Mucosa of descending colon (tissue), 3 donors: ENCODE measurements at regions of chr5 and their contacts with region 1.

Region 1: GRCh38 chr5:146541958-146542849 is 26.2 kb upstream of the GPR151 start:
- DNase-seq: peak; percentile 58 to 85 (median 84)
- ATAC-seq: peak; percentile 92
- H3K4me3 ChIP-seq: no peak overlapping the region
- H3K4me1 ChIP-seq: no peaks in the 10 kb centered on the region
- CTCF ChIP-seq: peak; percentile 81

Region 2: GRCh38 chr5:146965761-146966659 is 423.8 kb after region 1 on chr5:
- intact Hi-C with region 1: loop called (anchors 5 kb)
- DNase-seq: peak in 1 of 3 donors; percentile 80
- ATAC-seq: peak; percentile 88
- H3K4me3 ChIP-seq: no peak overlapping the region
- H3K4me1 ChIP-seq: no peaks in the 10 kb centered on the region
- CTCF ChIP-seq: peak; percentile 51

Region 3: DNA sequence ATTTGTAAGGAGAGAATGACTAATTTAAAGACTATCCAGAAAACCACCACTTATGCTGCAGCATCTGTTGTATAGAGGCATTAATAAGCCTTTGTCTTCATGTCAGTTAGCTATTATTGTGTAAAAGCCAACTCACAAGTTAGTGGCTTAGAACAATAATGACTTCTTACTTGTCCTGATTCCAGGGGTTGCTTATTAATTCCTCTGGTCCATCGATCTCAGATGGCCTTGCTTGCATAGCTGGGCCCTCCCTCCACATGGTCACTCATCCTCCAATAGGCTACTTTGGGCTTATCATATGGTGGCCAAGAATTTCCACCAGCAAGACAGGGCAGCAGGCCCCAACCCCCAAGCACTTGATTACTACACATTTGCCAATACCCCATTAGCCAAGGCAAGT is 648.1 kb after region 1 on chr5:
- intact Hi-C with region 1: loop called in 1 of 2 experiments (anchors 5 kb)
- DNase-seq: no peak
- ATAC-seq: no peak
- H3K4me3 ChIP-seq: no peak overlapping the region
- H3K4me1 ChIP-seq: no peaks in the 10 kb centered on the region
- CTCF ChIP-seq: no peak